ENCODE measurements at regions of chr6 and their contacts with region 1.

Region 1: GRCh38 chr6:77263003-77263402 is 200.3 kb downstream of the HTR1B start:
- DNase-seq: no peak
- ATAC-seq: no peak
- H3K4me3 ChIP-seq: no peak overlapping the region
- H3K27ac ChIP-seq: no peak overlapping the region
- H3K4me1 ChIP-seq: no peaks in the 10 kb centered on the region
- H3K27me3 ChIP-seq: no peaks in the 10 kb centered on the region
- CTCF ChIP-seq: no peak
- POLR2A ChIP-seq: no peak

Region 2: GRCh38 chr6:77332915-77333623 is 70.1 kb after region 1 on chr6:
- intact Hi-C with region 1: loop called in 1 of 10 experiments (anchors 2 kb)
- DNase-seq: no peak
- ATAC-seq: no peak
- H3K4me3 ChIP-seq: no peak overlapping the region
- H3K27ac ChIP-seq: no peak overlapping the region
- H3K4me1 ChIP-seq: no peaks in the 10 kb centered on the region
- H3K27me3 ChIP-seq: no peaks in the 10 kb centered on the region
- CTCF ChIP-seq: no peak
- POLR2A ChIP-seq: no peak

Region 3: GRCh38 chr6:77604476-77604875 is 341.5 kb after region 1 on chr6:
- intact Hi-C with region 1: no loop called
- DNase-seq: no peak
- ATAC-seq: no peak
- H3K4me3 ChIP-seq: no peak overlapping the region
- H3K27ac ChIP-seq: no peak overlapping the region
- H3K4me1 ChIP-seq: no peaks in the 10 kb centered on the region
- H3K27me3 ChIP-seq: no peaks in the 10 kb centered on the region
- CTCF ChIP-seq: no peak
- POLR2A ChIP-seq: no peak

Measured in heart left ventricle (tissue), 16 donors.